AG04450 (cell line): ENCODE measurements at regions of chr1 and their contacts with region 1.

Region 1: GRCh38 chr1:36239941-36240637 is 15.8 kb downstream of the THRAP3 start:
- DNase-seq: no peak
- H3K4me3 ChIP-seq: no peak overlapping the region
- H3K27ac ChIP-seq: peak overlapping the region; percentile 47
- H3K27me3 ChIP-seq: no peaks in the 10 kb centered on the region
- CTCF ChIP-seq: no peak

Region 2: GRCh38 chr1:35947547-35947946 is 292.5 kb before region 1 on chr1:
- CTCF ChIA-PET with region 1: no interaction called
- POLR2A ChIA-PET with region 1: no interaction called
- DNase-seq: no peak
- H3K4me3 ChIP-seq: no peak overlapping the region
- H3K27ac ChIP-seq: no peak overlapping the region
- H3K27me3 ChIP-seq: no peaks in the 10 kb centered on the region
- CTCF ChIP-seq: no peak

Region 3: GRCh38 chr1:36099681-36100341 is 140.3 kb before region 1 on chr1:
- CTCF ChIA-PET with region 1: interaction called, 3 read pairs
- POLR2A ChIA-PET with region 1: interaction called, 14 read pairs
- DNase-seq: peak; percentile 45
- H3K4me3 ChIP-seq: no peak overlapping the region
- H3K27ac ChIP-seq: no peak overlapping the region
- H3K27me3 ChIP-seq: no peaks in the 10 kb centered on the region
- CTCF ChIP-seq: peak; percentile 86

Region 4: DNA sequence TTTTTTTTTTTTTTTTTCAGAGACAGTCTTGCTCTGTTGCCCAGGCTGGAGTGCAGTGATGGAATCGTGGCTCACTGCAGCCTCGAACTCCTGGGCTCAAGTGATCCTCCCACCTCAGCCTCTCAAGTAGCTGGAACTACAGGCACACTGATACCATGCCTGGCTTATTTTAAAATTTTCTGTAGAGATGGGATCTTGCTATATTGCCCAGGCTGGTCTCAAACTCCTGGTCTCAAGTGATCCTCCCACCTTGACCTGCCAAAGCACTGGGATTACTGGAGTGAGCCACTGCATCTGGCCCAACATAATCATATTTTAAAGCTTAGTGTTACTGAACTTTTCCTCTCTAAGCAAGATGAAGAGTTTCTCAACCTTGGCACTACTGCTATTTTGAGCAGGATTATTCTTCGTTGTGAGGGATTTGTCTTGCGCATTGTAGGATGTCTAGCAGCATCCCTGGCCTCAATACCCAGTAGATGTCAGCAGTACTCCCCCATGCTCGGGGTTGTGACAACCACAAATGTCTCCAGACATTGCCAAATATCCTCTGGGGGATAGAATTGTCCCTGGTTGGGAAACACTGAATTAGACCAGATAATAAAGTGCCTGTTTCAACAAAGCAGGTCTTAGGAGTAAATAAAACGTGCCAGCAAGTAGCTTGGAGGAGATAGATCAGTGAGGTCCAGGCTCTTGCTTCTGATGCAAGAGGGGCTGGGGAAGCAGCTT is 30.9 kb before region 1 on chr1:
- CTCF ChIA-PET with region 1: no interaction called
- POLR2A ChIA-PET with region 1: no interaction called
- DNase-seq: no peak
- H3K4me3 ChIP-seq: no peak overlapping the region
- H3K27ac ChIP-seq: no peak overlapping the region
- H3K27me3 ChIP-seq: no peaks in the 10 kb centered on the region
- CTCF ChIP-seq: no peak

Region 5: DNA sequence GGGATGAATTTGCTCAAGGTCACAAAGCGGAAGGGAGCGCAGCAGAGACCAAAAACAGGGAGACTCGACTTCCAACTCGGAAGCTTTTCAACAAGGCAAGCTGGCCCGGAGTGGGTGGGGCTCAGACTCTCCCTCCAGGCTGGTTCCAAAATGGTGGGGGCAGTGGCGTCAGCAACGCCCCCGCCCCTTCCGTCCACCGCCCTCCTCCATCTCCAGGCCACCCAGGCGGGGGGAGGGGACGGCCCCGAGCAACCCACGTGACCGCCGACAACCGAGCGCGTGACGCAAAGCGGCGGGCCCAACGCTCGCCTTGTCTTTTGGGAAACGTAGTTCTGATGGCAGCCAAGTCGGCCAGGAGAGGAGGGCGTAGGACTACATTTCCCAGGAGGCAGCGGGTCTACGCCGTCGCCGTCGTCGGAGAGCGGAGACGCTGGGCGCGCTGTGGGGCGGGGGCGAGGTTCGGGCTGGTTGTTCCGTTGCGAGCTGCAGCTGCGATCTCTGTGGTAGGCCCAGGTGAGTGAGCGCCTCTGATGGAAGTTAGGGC is 16.0 kb before region 1 on chr1 and contains the start of gene THRAP3:
- CTCF ChIA-PET with region 1: interaction called, 16 read pairs
- POLR2A ChIA-PET with region 1: interaction called, 10 read pairs
- DNase-seq: peak; percentile 98
- H3K4me3 ChIP-seq: peak within 1 kb of the TSS; percentile 97
- H3K27ac ChIP-seq: peak within 1 kb of the TSS; percentile 94
- H3K27me3 ChIP-seq: no peaks in the 10 kb centered on the region
- CTCF ChIP-seq: no peak
- polyA plus RNA-seq, gene THRAP3: 76.0 and 76.5 TPM in 2 replicates